ENCODE measurements at regions of chr1 and their contacts with region 1.

Region 1: GRCh38 chr1:201955009-201955728 is at the start of gene TIMM17A:
- DNase-seq: peak; percentile 84 to 96 (median 88)
- ATAC-seq: peak; percentile 99
- H3K4me3 ChIP-seq: peak within 1 kb of the TSS; percentile 74
- H3K4me3 Mint-ChIP-seq: peak within 1 kb of the TSS; percentile 97
- H3K27ac ChIP-seq: peak within 1 kb of the TSS; percentile 71 to 78
- H3K27ac Mint-ChIP-seq: peak within 1 kb of the TSS; percentile 96
- H3K4me1 ChIP-seq: peaks cover 18% of the 10 kb centered on the region
- H3K4me1 Mint-ChIP-seq: peaks cover 27% of the 10 kb centered on the region
- H3K27me3 ChIP-seq: no peaks in the 10 kb centered on the region
- H3K27me3 Mint-ChIP-seq: no peaks in the 10 kb centered on the region
- CTCF ChIP-seq: no peak
- total RNA-seq, gene TIMM17A: 46.2 to 49.6 TPM

Region 2: DNA sequence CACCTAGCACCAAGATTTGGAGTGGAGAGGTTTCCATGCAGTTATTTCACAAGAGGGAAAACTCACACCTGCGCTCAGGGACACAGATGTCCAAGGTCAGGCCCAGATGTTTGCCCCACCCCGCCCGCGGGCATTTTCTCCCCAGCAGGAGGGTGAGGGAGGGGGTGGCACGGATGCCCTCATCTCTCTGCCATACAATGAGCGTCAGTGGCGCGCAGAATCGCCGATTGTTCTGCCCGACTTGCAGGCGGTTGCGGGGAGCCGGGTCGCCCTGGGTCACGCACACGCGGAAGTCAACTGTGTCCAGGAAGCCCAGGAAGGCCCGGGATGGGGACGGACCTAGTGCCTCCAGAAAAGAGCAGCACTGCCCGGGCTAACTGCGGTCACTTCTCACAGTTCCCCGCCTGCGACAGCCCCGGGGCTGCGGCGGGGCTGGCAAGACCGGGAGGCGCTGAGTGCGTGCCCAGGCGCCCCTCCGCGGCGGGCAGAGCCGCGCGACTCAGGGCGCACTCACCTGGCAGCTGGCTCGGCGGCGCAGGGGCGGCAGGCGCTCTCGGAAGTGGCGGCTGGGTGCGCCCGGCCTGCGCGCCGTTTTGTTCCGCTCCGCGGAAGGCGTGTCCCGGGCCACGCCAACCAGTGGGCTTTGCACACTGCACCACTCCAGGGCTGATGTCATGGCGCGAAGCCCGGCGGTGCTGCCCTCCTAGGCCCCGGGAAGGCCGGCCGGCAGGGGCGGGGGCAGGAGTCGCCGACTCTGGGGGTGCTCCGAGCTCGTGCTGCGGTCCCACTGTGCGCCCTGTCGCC is 448.4 kb before region 1 on chr1 and contains the start of gene CSRP1:
- CTCF ChIA-PET with region 1: no interaction called
- POLR2A ChIA-PET with region 1: no interaction called
- intact Hi-C with region 1: loop called in 1 of 2 experiments (anchors 5 kb)
- DNase-seq: peak; percentile 66 to 91 (median 77)
- ATAC-seq: peak; percentile 95
- H3K4me3 ChIP-seq: peak within 1 kb of the TSS; percentile 82
- H3K4me3 Mint-ChIP-seq: peak within 1 kb of the TSS; percentile 96
- H3K27ac ChIP-seq: peak within 1 kb of the TSS; percentile 37 to 58
- H3K27ac Mint-ChIP-seq: peak within 1 kb of the TSS; percentile 86
- H3K4me1 ChIP-seq: peaks cover 40% of the 10 kb centered on the region
- H3K4me1 Mint-ChIP-seq: peaks cover 49% of the 10 kb centered on the region
- H3K27me3 ChIP-seq: no peaks in the 10 kb centered on the region
- H3K27me3 Mint-ChIP-seq: no peaks in the 10 kb centered on the region
- CTCF ChIP-seq: peak; percentile 20
- total RNA-seq, gene CSRP1: 34.8 to 39.9 TPM

Region 3: GRCh38 chr1:201828820-201829774 is 126.1 kb before region 1 on chr1 and contains the start of gene IPO9:
- CTCF ChIA-PET with region 1: interaction called, 3 read pairs
- POLR2A ChIA-PET with region 1: interaction called, 3 read pairs
- intact Hi-C with region 1: loop called in 1 of 2 experiments (anchors 5 kb)
- DNase-seq: peak; percentile 90 to 98 (median 94)
- ATAC-seq: peak; percentile 91
- H3K4me3 ChIP-seq: peak within 1 kb of the TSS; percentile 94
- H3K4me3 Mint-ChIP-seq: peak within 1 kb of the TSS; percentile 95
- H3K27ac ChIP-seq: peak within 1 kb of the TSS; percentile 84 to 90
- H3K27ac Mint-ChIP-seq: peak within 1 kb of the TSS; percentile 88
- H3K4me1 ChIP-seq: peaks cover 33% of the 10 kb centered on the region
- H3K4me1 Mint-ChIP-seq: peaks cover 44% of the 10 kb centered on the region
- H3K27me3 ChIP-seq: no peaks in the 10 kb centered on the region
- H3K27me3 Mint-ChIP-seq: no peaks in the 10 kb centered on the region
- CTCF ChIP-seq: peak; percentile 97
- total RNA-seq, gene IPO9: 17.1 to 20.1 TPM

Region 4: DNA sequence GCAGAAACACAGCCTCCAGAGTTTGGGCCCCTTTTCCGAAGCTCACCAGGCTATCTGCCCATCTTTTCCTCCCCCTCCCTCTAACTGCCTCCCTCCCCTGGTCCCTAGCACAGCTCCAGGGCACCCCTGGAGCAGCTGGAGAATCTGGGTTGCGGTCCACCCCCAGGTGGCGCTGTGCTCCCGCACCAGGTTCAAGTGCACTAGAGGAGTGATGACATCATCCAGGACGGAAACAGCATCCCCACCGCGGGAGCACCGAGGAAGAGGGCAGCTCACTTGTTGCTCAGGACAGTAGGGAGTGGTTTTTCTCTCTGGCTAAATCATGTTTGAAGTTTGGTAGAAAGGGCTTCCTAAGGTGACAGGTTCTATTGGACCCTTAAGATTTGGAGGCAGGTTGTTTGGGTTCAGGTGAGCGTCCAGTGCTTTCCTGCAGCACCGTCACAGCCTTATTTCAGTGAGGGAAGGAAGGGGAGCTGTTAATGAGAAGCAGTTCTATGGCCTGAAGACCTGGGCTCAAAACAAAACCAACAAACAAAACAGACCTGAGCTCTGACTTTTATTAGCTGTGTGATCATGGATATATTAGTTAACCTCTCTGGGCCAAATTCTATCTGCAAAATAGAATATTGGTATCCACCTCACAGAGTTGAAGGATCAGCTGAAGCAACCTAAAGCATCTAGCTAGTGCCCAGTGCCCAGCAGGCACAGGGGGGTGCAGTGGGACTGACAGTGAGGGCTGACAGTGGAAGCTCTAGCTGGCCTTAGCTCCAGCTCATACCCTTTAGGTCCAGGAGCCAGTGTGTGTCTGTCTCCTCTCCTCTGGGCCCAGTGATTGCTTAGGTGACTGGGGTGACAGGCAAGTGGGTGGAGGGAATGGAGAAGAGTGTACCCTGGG is 59.0 kb before region 1 on chr1:
- CTCF ChIA-PET with region 1: interaction called, 11 read pairs
- POLR2A ChIA-PET with region 1: interaction called, 4 read pairs
- intact Hi-C with region 1: loop called (anchors 5 kb)
- DNase-seq: peak; percentile 61 to 89 (median 74)
- ATAC-seq: peak; percentile 91
- H3K4me3 ChIP-seq: no peak overlapping the region
- H3K4me3 Mint-ChIP-seq: peak overlapping the region; percentile 46
- H3K27ac ChIP-seq: no peak overlapping the region
- H3K27ac Mint-ChIP-seq: no peak overlapping the region
- H3K4me1 ChIP-seq: peaks cover 9% of the 10 kb centered on the region
- H3K4me1 Mint-ChIP-seq: peaks cover 7% of the 10 kb centered on the region
- H3K27me3 ChIP-seq: peaks cover 4 to 14% of the 10 kb centered on the region in 2 experiments
- H3K27me3 Mint-ChIP-seq: peaks cover 47% of the 10 kb centered on the region
- CTCF ChIP-seq: peak; percentile 77

Region 5: GRCh38 chr1:201982623-201983379 is 27.6 kb after region 1 on chr1 and contains the start of gene RNPEP:
- CTCF ChIA-PET with region 1: no interaction called
- POLR2A ChIA-PET with region 1: interaction called, 14 read pairs
- intact Hi-C with region 1: loop called in 1 of 2 experiments (anchors 2 kb)
- DNase-seq: peak; percentile 21 to 78 (median 51)
- ATAC-seq: peak; percentile 86
- H3K4me3 ChIP-seq: peak within 1 kb of the TSS; percentile 57
- H3K4me3 Mint-ChIP-seq: peak within 1 kb of the TSS; percentile 97
- H3K27ac ChIP-seq: no peak within 1 kb of the TSS
- H3K27ac Mint-ChIP-seq: peak within 1 kb of the TSS; percentile 87
- H3K4me1 ChIP-seq: peaks cover 17% of the 10 kb centered on the region
- H3K4me1 Mint-ChIP-seq: peaks cover 26% of the 10 kb centered on the region
- H3K27me3 ChIP-seq: no peaks in the 10 kb centered on the region
- H3K27me3 Mint-ChIP-seq: no peaks in the 10 kb centered on the region
- CTCF ChIP-seq: no peak
- total RNA-seq, gene RNPEP: 19.9 to 20.8 TPM

Region 6: GRCh38 chr1:202018468-202019255 is 63.5 kb after region 1 on chr1:
- CTCF ChIA-PET with region 1: no interaction called
- POLR2A ChIA-PET with region 1: no interaction called
- intact Hi-C with region 1: no loop called
- DNase-seq: no peak
- ATAC-seq: no peak
- H3K4me3 ChIP-seq: no peak overlapping the region
- H3K4me3 Mint-ChIP-seq: no peak overlapping the region
- H3K27ac ChIP-seq: no peak overlapping the region
- H3K27ac Mint-ChIP-seq: no peak overlapping the region
- H3K4me1 ChIP-seq: no peaks in the 10 kb centered on the region
- H3K4me1 Mint-ChIP-seq: no peaks in the 10 kb centered on the region
- H3K27me3 ChIP-seq: peaks cover 0 to 4% of the 10 kb centered on the region in 2 experiments
- H3K27me3 Mint-ChIP-seq: peaks cover 30% of the 10 kb centered on the region
- CTCF ChIP-seq: no peak

Region 7: DNA sequence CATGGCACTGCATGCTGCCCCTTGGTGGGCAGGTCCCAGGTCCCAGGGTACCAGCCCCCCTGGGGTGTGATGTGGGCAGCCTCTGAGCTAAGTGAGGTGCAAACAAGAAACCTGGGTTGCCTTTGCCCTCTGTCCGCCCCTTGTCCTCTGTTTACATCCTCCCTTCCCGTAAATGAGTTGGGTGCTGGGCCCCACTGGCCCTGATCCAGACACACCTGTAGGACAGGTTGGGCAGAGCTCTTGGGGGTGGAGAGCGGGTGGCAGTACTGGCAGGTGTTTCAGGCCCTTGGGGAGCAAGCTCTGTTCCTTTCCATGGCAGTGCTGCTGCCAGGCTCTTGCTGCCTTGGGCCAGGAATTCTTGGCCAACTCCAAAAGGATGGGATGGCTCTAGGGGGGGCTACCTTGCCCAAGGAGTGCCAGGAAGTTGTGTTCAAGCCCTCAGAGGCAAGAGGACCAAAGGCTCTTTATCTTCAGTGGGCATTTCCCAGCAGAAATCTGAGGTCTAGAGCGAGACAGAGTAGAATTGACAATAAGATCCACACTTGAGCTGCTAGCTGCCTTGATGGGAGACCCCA is 91.1 kb after region 1 on chr1:
- CTCF ChIA-PET with region 1: no interaction called
- POLR2A ChIA-PET with region 1: no interaction called
- intact Hi-C with region 1: no loop called
- DNase-seq: no peak
- ATAC-seq: no peak
- H3K4me3 ChIP-seq: no peak overlapping the region
- H3K4me3 Mint-ChIP-seq: no peak overlapping the region
- H3K27ac ChIP-seq: no peak overlapping the region
- H3K27ac Mint-ChIP-seq: no peak overlapping the region
- H3K4me1 ChIP-seq: no peaks in the 10 kb centered on the region
- H3K4me1 Mint-ChIP-seq: no peaks in the 10 kb centered on the region
- H3K27me3 ChIP-seq: peaks cover 0 to 4% of the 10 kb centered on the region in 2 experiments
- H3K27me3 Mint-ChIP-seq: peaks cover 15% of the 10 kb centered on the region
- CTCF ChIP-seq: no peak

Region 8: DNA sequence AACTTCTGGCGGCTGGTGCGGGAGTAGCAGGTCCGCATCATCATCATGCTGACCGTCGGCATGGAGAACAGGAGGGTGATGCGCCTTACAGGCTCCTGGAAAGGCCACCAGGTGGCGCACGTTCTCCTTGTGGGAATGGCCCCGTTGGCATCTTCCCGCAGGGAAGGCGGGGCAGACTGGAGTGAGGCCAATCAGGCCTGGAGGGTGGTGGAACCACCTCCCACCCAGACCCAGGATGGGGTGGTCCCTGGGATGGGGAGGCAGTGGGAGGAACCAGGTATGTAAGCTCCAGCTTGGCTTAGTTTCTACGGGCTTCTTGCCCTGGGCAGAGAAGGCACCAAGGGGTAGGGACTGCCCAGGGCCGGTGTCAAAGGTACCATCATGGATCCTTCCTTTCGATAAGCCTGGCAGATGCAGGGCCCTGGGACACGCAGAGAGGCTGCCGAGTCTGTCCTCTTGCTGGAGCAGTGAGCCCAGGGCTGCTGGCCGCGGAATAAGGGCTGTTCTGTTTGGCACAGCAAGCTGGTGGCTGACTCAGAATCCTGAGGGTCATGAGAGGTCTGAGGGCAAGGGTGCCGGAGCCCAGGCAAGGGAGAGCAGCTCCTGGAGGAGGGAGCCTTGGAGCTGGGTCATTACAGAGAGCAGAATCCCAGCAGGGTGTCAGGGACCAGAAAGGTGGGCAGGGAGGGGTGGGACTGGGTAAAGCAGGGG is 229.7 kb after region 1 on chr1:
- CTCF ChIA-PET with region 1: no interaction called
- POLR2A ChIA-PET with region 1: no interaction called
- intact Hi-C with region 1: no loop called
- DNase-seq: peak; percentile 46 to 84 (median 58)
- ATAC-seq: peak; percentile 58
- H3K4me3 ChIP-seq: no peak overlapping the region
- H3K4me3 Mint-ChIP-seq: no peak overlapping the region
- H3K27ac ChIP-seq: no peak overlapping the region
- H3K27ac Mint-ChIP-seq: no peak overlapping the region
- H3K4me1 ChIP-seq: peaks cover 7% of the 10 kb centered on the region
- H3K4me1 Mint-ChIP-seq: peaks cover 14% of the 10 kb centered on the region
- H3K27me3 ChIP-seq: no peaks in the 10 kb centered on the region
- H3K27me3 Mint-ChIP-seq: no peaks in the 10 kb centered on the region
- CTCF ChIP-seq: peak; percentile 84

Region 9: GRCh38 chr1:202335284-202335683 is 380.1 kb after region 1 on chr1:
- CTCF ChIA-PET with region 1: no interaction called
- POLR2A ChIA-PET with region 1: no interaction called
- intact Hi-C with region 1: loop called in 1 of 2 experiments (anchors 5 kb)
- DNase-seq: no peak
- ATAC-seq: no peak
- H3K4me3 ChIP-seq: no peak overlapping the region
- H3K4me3 Mint-ChIP-seq: no peak overlapping the region
- H3K27ac ChIP-seq: no peak overlapping the region
- H3K27ac Mint-ChIP-seq: no peak overlapping the region
- H3K4me1 ChIP-seq: peaks cover 6% of the 10 kb centered on the region
- H3K4me1 Mint-ChIP-seq: no peaks in the 10 kb centered on the region
- H3K27me3 ChIP-seq: no peaks in the 10 kb centered on the region
- H3K27me3 Mint-ChIP-seq: no peaks in the 10 kb centered on the region
- CTCF ChIP-seq: no peak

Measured in CD4-positive, alpha-beta T cell (primary cell).